AG04449 (cell line): ENCODE measurements at regions of chr14 and their contacts with region 1.

Region 1: DNA sequence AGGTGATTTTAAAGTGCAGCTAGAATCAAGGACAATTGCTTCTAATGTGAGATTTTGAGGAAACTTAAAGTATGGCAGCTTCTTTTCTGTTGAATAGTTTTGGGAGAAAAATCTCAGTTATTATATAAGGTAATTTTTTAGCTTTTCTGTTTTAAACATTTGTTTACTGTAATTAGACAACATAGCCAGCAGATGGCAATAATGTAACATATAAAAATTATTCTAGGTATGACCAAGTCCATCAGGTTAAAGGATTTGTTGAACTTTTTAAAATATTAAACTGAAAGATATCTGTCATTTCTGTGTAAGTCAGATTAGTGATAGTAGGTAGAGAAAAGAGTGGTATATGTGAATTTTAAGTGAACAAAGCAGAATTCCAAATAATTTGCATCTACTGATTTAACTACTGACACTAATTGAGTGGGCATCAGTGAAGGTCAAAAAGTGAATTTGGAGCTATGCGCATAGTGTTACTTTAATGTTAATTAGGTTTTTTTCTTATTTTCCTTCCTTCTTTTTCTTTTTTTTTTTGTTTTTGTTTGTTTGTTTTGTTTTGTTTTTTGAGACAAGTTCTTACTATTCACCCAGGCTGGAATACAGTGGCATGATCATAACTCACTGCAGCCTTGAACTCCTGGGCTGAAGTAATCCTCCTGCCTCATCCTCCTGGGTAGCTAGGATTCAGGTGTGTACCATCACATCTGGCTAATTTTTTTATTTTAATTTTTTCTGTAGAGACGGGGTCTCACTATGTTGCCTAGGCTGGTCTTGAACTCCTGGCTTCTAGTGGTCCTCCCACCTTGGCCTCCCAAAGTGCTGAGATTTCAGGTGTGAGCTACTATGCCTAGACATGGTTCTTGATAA is 18.6 kb downstream of the PRORP start:
- DNase-seq: no peak
- H3K4me3 ChIP-seq: no peak overlapping the region
- CTCF ChIP-seq: no peak

Region 2: DNA sequence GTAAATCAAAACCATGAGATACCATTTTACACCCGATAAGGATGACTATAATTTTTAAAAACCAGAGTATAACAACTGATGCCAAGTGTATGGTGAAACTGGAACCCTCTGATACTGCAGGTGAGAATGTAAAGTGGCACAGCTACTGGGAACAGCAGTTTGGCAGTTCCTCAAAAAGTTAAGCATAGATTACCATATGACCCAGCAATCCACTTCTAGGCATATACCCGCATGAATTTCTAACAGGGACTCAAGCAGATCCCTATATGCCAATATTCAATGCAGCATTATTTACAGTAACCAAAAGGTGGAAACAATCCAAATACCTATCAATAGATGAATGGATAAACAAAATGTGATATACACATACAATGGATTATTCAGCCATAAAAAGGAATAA is 323.2 kb before region 1 on chr14:
- CTCF ChIA-PET with region 1: no interaction called
- POLR2A ChIA-PET with region 1: no interaction called
- DNase-seq: no peak
- H3K4me3 ChIP-seq: no peak overlapping the region
- CTCF ChIP-seq: no peak

Region 3: DNA sequence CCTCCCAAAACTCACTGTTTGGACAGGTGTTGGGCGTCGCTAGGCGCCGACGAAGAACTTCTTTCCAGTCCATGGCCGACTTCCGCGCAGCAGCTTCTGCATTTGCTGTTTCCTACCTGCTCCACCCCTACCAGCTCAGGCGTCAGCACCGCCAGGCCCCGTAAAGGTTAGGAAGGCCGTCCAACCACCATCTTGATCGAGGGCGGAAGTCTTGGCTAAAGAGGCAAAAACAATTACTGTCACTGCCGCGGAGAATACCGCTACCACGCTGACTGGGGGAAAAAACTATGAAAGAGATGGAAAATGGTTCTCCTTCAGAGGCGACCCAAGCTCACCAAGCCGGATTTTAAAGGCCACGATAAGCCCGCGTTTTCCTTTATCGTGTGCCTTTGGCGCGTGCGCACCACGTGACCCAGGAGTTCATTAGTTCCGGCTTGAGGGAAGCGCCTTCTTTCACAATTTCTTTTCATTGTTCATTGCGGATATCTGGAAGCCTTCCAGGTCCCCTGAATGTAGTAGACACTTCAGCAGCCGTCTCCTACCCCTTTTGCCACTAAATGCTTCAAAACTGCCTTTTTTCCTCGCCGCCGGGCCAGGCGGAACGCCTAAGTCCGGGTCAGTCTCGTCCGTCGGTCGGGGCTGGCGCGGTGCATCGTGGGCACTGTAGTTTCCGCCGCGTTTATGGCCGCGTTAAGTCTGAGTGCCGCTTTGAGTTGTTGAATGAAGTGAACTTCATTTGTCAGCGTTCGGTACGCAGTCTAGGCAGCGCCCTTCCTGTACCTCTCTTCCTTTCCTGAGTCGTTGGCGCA is 18.9 kb before region 1 on chr14 and contains the starts of genes PPP2R3C and PRORP:
- CTCF ChIA-PET with region 1: interaction called, 30 read pairs
- POLR2A ChIA-PET with region 1: no interaction called
- DNase-seq: peak; percentile 59
- H3K4me3 ChIP-seq: peak within 1 kb of the TSS; percentile 97
- CTCF ChIP-seq: no peak

Region 4: DNA sequence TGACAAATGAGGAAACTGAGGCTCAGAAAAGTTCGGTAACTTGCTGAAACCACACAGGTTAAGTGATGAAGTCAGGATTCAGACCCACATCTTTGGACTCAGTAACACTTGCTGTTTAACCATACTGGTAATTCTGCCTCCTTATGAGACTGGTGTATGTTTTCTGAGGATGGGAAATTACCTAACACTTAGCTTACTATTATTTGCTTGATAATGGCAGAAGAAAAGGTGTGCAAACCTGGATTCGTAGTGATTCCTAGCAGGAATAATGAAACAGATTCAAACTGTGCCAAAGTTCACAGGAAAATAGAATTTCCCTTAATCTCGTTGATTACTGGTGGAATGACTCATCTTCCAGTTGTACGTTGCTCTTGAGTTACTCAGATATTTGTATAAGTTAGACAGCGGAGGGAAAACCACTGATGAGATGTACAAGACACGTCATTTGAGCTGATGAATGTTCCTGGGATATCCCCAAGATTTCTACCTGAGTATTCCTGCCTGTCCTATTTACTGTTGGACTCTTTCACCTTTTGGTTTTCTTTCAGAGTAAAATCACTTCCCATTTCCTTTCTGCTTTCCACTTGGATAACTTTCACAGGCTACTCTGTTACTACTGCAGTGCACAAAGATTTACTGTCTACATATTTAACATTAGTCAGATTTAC is 18.9 kb after region 1 on chr14:
- CTCF ChIA-PET with region 1: interaction called, 34 read pairs
- POLR2A ChIA-PET with region 1: no interaction called
- DNase-seq: peak; percentile 83
- H3K4me3 ChIP-seq: no peak overlapping the region; the same call in 1 of the 2 replicates
- CTCF ChIP-seq: no peak

Region 5: DNA sequence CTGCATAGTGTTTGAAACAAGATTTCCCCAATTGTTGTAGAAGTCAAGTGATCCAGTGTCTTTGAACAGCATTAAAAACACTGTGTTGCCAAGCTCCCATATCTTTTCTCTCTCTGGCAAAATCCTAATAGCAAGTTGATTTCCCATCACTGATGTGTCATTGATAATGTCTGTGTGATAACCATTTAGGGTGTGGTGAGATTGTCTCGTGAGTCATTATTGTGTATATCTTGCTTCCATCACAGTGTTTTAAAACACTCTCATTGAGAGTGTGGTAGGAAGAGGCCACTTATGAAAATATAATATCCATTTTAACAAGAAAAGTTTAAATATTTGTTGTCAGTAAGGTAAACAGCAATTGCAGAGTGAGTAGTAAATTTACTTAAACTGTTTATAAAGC is 56.1 kb after region 1 on chr14:
- CTCF ChIA-PET with region 1: interaction called, 13 read pairs
- POLR2A ChIA-PET with region 1: no interaction called
- DNase-seq: no peak
- H3K4me3 ChIP-seq: no peak overlapping the region
- CTCF ChIP-seq: no peak

Region 6: GRCh38 chr14:35215110-35215876 is 74.3 kb after region 1 on chr14:
- CTCF ChIA-PET with region 1: interaction called, 20 read pairs
- POLR2A ChIA-PET with region 1: no interaction called
- DNase-seq: peak; percentile 29
- H3K4me3 ChIP-seq: no peak overlapping the region
- CTCF ChIP-seq: peak; percentile 45

Region 7: GRCh38 chr14:35687335-35687939 is 546.5 kb after region 1 on chr14:
- CTCF ChIA-PET with region 1: interaction called, 15 read pairs
- POLR2A ChIA-PET with region 1: no interaction called
- DNase-seq: no peak
- H3K4me3 ChIP-seq: no peak overlapping the region
- CTCF ChIP-seq: peak; percentile 66

Region 8: GRCh38 chr14:35814371-35815005 is 673.5 kb after region 1 on chr14:
- CTCF ChIA-PET with region 1: interaction called, 15 read pairs
- POLR2A ChIA-PET with region 1: no interaction called
- DNase-seq: no peak
- H3K4me3 ChIP-seq: no peak overlapping the region
- CTCF ChIP-seq: peak; percentile 72